ENCODE measurements at regions of chr3 and their contacts with region 1.

Region 1: GRCh38 chr3:107235928-107236315 is 141.3 kb upstream of the CCDC54 start:
- DNase-seq: peak; percentile 79 to 91 (median 85)
- H3K4me3 ChIP-seq: peak overlapping the region in 6 of 7 experiments; percentile 31 to 77 (median 49)
- H3K27ac ChIP-seq: no peak overlapping the region
- H3K4me1 ChIP-seq: peaks cover 0 to 7% (median 3%) of the 10 kb centered on the region in 4 experiments
- H3K27me3 ChIP-seq: no peaks in the 10 kb centered on the region

Region 2: GRCh38 chr3:107251819-107252218 is 15.9 kb after region 1 on chr3:
- CTCF ChIA-PET with region 1: interaction called, 11 read pairs
- POLR2A ChIA-PET with region 1: interaction called, 4 read pairs
- DNase-seq: no peak
- H3K4me3 ChIP-seq: no peak overlapping the region
- H3K27ac ChIP-seq: no peak overlapping the region
- H3K4me1 ChIP-seq: no peaks in the 10 kb centered on the region
- H3K27me3 ChIP-seq: no peaks in the 10 kb centered on the region

Region 3: DNA sequence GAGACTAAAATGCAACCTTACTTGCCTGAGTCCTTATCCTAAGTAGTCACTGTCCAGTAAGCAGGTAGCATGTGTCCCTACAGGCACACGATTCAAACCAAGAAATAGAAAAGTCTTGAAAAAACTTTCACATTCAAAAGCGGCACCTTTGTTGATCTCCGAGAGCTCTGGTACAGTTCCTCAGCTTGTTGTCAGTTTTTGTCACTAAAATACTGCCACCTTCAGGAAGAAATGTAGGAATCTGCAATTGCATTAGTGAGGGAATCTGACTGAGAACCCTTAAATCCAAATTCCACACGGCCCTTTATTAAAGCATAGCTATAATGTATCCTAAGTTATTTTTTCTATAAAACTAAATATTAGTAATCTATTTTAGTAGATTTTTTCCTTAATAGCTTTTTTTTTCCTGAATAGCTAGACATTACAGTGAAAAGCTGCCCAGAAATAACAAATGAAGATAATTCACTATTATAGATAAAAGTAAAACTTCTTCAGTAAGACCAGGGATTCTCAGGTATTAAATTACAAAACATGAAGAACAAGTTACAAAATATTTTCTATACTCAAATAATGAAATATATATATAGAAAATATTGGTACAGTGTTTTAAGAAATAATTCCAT is 185.4 kb after region 1 on chr3:
- CTCF ChIA-PET with region 1: interaction called, 25 read pairs
- POLR2A ChIA-PET with region 1: no interaction called
- DNase-seq: peak; percentile 75 to 84 (median 84)
- H3K4me3 ChIP-seq: peak overlapping the region in 1 of 7 experiments; percentile 57
- H3K27ac ChIP-seq: no peak overlapping the region
- H3K4me1 ChIP-seq: peaks cover 0 to 4% (median 2%) of the 10 kb centered on the region in 4 experiments
- H3K27me3 ChIP-seq: no peaks in the 10 kb centered on the region

Region 4: GRCh38 chr3:107429320-107430181 is 193.6 kb after region 1 on chr3:
- CTCF ChIA-PET with region 1: interaction called, 16 read pairs
- POLR2A ChIA-PET with region 1: no interaction called
- DNase-seq: peak; percentile 81 to 87 (median 87)
- H3K4me3 ChIP-seq: peak overlapping the region in 6 of 7 experiments; percentile 33 to 95 (median 82)
- H3K27ac ChIP-seq: no peak overlapping the region
- H3K4me1 ChIP-seq: peaks cover 8 to 31% (median 22%) of the 10 kb centered on the region in 4 experiments
- H3K27me3 ChIP-seq: no peaks in the 10 kb centered on the region

Region 5: GRCh38 chr3:107543666-107544065 is 307.7 kb after region 1 on chr3:
- CTCF ChIA-PET with region 1: interaction called, 22 read pairs
- POLR2A ChIA-PET with region 1: no interaction called
- DNase-seq: peak; percentile 44 to 66 (median 65)
- H3K4me3 ChIP-seq: no peak overlapping the region
- H3K27ac ChIP-seq: no peak overlapping the region
- H3K4me1 ChIP-seq: no peaks in the 10 kb centered on the region
- H3K27me3 ChIP-seq: no peaks in the 10 kb centered on the region